A549 (cell line): ENCODE measurements at regions of chr19 and their contacts with region 1.

Region 1: GRCh38 chr19:46487802-46488445 is 7.7 kb downstream of the PNMA8B start:
- DNase-seq: peak; percentile 71 to 86
- ATAC-seq: peak; percentile 75 to 93
- H3K4me3 ChIP-seq: peak overlapping the region; percentile 46
- H3K27ac ChIP-seq: peak overlapping the region; percentile 65 to 72; a peak in 5 of 6 replicates
- H3K4me1 ChIP-seq: peaks cover 10% of the 10 kb centered on the region; the same call in 1 of the 3 replicates
- CTCF ChIP-seq: peak; percentile 98
- EP300 ChIP-seq: no peak
- POLR2A ChIP-seq: no peak
- RAD21 ChIP-seq: peak; percentile 99 to 100

Region 2: DNA sequence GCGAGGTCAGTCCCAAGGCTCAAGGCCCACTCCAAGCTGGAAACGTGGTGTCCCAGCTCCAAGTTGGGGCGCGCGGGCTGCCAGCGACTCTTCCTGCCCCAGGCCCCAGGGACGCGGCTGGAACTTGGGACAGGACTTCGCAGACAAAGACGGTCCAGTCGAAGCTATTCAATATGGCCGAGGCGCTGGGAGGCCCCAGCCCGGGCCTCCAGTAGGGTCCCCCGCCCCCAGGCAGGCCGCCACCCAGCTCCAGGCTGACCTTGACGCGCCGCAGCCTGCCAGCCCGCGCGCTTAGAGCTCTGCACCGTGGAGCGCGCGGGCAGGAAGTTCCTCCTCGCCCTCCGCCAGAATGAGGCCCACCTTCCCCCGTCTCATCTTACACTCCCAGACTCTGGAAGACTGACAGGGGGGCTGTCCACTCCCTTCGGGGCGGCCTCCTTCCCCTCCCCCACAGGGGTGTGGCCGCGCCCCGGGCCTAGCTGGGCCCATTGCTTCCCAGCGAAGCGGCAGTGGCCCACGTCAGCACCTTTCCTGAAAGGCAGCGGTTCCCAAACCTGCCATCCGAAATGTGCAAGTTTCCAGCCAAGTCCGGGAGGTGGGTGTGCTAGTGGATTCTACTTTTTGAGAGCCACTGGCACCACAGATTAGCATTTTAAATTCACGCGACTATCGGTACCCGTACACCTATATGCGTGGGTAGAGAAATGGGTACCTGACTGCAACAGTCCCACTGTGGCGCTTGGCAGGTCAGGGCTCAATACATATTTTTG is 74.5 kb before region 1 on chr19 and contains the start of gene CCDC8:
- CTCF ChIA-PET with region 1: interaction called, 358 read pairs
- POLR2A ChIA-PET with region 1: no interaction called
- DNase-seq: no peak
- ATAC-seq: no peak
- H3K4me3 ChIP-seq: no peak within 1 kb of the TSS
- H3K27ac ChIP-seq: no peak within 1 kb of the TSS
- H3K4me1 ChIP-seq: peaks cover 11% of the 10 kb centered on the region; the same call in 2 of the 3 replicates
- CTCF ChIP-seq: no peak
- EP300 ChIP-seq: no peak
- POLR2A ChIP-seq: no peak
- RAD21 ChIP-seq: no peak
- polyA plus RNA-seq, gene CCDC8: 0.04 TPM in 1 of 2 replicates, not detected in the other

Region 3: GRCh38 chr19:46451352-46451751 is 36.6 kb before region 1 on chr19:
- CTCF ChIA-PET with region 1: interaction called, 11 read pairs
- POLR2A ChIA-PET with region 1: no interaction called
- DNase-seq: no peak
- ATAC-seq: no peak
- H3K4me3 ChIP-seq: no peak overlapping the region
- H3K27ac ChIP-seq: no peak overlapping the region
- H3K4me1 ChIP-seq: no peaks in the 10 kb centered on the region
- CTCF ChIP-seq: no peak
- EP300 ChIP-seq: no peak
- POLR2A ChIP-seq: no peak
- RAD21 ChIP-seq: no peak

Region 4: GRCh38 chr19:46503848-46504453 is 16.0 kb after region 1 on chr19:
- CTCF ChIA-PET with region 1: interaction called, 28 read pairs
- POLR2A ChIA-PET with region 1: no interaction called
- DNase-seq: no peak
- ATAC-seq: no peak
- H3K4me3 ChIP-seq: no peak overlapping the region
- H3K27ac ChIP-seq: no peak overlapping the region
- H3K4me1 ChIP-seq: no peaks in the 10 kb centered on the region
- CTCF ChIP-seq: no peak
- EP300 ChIP-seq: no peak
- POLR2A ChIP-seq: no peak
- RAD21 ChIP-seq: no peak

Region 5: GRCh38 chr19:46520616-46521015 is 32.7 kb after region 1 on chr19:
- CTCF ChIA-PET with region 1: interaction called, 12 read pairs
- POLR2A ChIA-PET with region 1: no interaction called
- DNase-seq: no peak
- ATAC-seq: no peak
- H3K4me3 ChIP-seq: no peak overlapping the region
- H3K27ac ChIP-seq: no peak overlapping the region
- H3K4me1 ChIP-seq: no peaks in the 10 kb centered on the region
- CTCF ChIP-seq: no peak
- EP300 ChIP-seq: no peak
- POLR2A ChIP-seq: no peak
- RAD21 ChIP-seq: no peak